Dorsolateral prefrontal cortex (tissue), 120 donors: ENCODE measurements at regions of chr7 and their contacts with region 1.

Region 1: GRCh38 chr7:94394399-94395140 is at the start of gene COL1A2:
- DNase-seq: no peak
- H3K4me3 ChIP-seq: peak within 1 kb of the TSS in 57 of 59 donors; percentile 5 to 66 (median 42)
- H3K27ac ChIP-seq: peak within 1 kb of the TSS in 37 of 59 donors; percentile 2 to 77 (median 41)
- H3K27me3 ChIP-seq: peaks cover 0 to 23% (median 5%) of the 10 kb centered on the region in 45 donors
- CTCF ChIP-seq: no peak
- total RNA-seq, gene COL1A2: 2.1 to 73.5 (median 9.3) TPM

Region 2: GRCh38 chr7:93757421-93757820 is 637.1 kb before region 1 on chr7:
- intact Hi-C with region 1: no loop called
- DNase-seq: no peak
- H3K4me3 ChIP-seq: no peak overlapping the region
- H3K27ac ChIP-seq: no peak overlapping the region
- H3K27me3 ChIP-seq: peaks cover 0 to 12% (median 0%) of the 10 kb centered on the region in 45 donors
- CTCF ChIP-seq: no peak

Region 3: DNA sequence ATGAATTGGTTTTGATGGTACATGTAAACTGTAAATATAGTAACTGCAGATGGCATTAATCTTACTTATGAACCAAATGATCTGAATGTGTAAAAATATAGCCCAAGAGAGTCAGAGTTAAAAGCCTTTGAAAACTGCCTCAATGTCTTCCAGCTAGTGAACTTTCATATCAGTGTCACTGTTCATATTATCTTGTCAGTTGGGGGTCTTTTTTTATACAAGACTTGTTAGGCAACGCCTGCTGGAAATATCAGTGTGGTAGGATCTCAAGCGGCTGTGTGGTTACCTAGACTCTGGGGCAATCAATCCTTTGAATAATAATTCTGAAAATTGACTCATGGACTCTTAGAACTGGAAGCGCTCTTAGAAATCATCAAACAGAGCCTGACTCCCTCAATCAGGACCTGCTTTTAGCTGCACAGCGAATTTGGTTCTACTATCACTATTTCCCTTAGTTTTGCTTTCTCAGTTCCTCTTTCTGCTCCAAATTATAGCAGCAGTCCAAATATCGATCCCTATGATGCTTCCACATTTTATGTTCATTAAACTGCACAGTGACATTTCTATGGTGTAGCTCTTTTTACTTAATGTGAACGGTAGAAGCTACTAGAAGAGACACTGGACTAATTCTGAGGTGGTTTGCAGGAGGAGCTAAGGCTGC is 100.0 kb before region 1 on chr7:
- intact Hi-C with region 1: loop called in 1 of 2 experiments (anchors 5 kb)
- DNase-seq: no peak
- H3K4me3 ChIP-seq: peak overlapping the region in 2 of 59 donors; percentile 9
- H3K27ac ChIP-seq: peak overlapping the region in 1 of 59 donors; percentile 19
- H3K27me3 ChIP-seq: peaks cover 0 to 22% (median 0%) of the 10 kb centered on the region in 45 donors
- CTCF ChIP-seq: no peak

Region 4: DNA sequence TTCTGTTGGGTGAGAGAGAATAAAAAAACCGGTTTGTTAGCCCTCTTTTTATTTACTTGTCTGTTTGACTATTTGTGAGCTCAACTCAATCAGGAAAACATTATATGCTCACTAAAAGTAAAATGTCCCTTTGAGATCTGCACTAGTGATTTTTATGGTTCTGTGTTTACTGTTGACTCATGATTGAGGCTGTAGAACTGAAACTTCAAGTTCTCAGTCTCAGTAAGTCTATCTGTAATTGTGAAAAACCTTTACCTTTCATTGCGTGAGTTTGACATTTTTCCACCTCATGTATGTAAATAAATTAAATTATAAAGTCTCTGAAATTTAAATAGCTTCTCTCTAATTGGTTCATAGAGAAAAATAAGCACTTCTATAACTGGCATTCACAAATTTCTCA is 98.0 kb after region 1 on chr7:
- intact Hi-C with region 1: no loop called
- DNase-seq: no peak
- H3K4me3 ChIP-seq: no peak overlapping the region
- H3K27ac ChIP-seq: no peak overlapping the region
- H3K27me3 ChIP-seq: peaks cover 0 to 4% (median 0%) of the 10 kb centered on the region in 45 donors
- CTCF ChIP-seq: no peak